ENCODE measurements at regions of chr15 and their contacts with region 1.

Region 1: GRCh38 chr15:58331903-58332675 is 99.7 kb upstream of the LIPC start:
- DNase-seq: peak; percentile 92 to 96 (median 95)
- ATAC-seq: peak; percentile 69 to 79 (median 75)
- H3K4me3 ChIP-seq: no peak overlapping the region
- H3K27ac ChIP-seq: peak overlapping the region; percentile 89 to 95 (median 91)
- H3K4me1 ChIP-seq: peaks cover 0 to 35% (median 14%) of the 10 kb centered on the region in 4 donors
- H3K27me3 ChIP-seq: no peaks in the 10 kb centered on the region
- CTCF ChIP-seq: no peak
- POLR2A ChIP-seq: peak; percentile 46

Region 2: GRCh38 chr15:58378254-58379085 is 46.4 kb after region 1 on chr15:
- intact Hi-C with region 1: no loop called
- DNase-seq: no peak
- ATAC-seq: no peak
- H3K4me3 ChIP-seq: no peak overlapping the region
- H3K27ac ChIP-seq: no peak overlapping the region
- H3K4me1 ChIP-seq: peaks cover 0 to 5% (median 2%) of the 10 kb centered on the region in 4 donors
- H3K27me3 ChIP-seq: no peaks in the 10 kb centered on the region
- CTCF ChIP-seq: no peak
- POLR2A ChIP-seq: no peak

Region 3: DNA sequence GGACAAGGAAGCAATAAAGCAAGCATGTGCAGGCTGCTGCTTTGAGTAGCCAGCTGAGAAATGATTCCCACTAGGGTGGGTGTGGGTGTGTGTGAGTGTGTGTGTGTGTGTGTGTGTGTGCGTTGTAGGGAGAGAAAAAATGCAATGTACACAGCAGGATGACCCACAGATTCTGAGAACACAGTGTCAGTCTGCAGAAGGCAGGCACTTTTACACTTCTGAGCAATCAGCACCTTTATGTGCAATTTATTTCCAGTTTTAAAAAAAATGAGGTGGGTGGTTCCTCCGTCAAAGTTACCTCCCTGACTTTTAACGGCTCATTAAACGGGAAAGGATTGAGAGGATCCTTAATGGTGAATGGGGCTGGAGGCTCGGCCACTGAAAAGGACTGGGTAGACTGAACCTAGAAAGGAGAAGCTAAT is 61.2 kb after region 1 on chr15:
- intact Hi-C with region 1: loop called in 1 of 2 experiments (anchors 5 kb)
- DNase-seq: no peak
- ATAC-seq: no peak
- H3K4me3 ChIP-seq: no peak overlapping the region
- H3K27ac ChIP-seq: peak overlapping the region in 1 of 3 donors; percentile 57
- H3K4me1 ChIP-seq: peaks cover 0 to 47% (median 18%) of the 10 kb centered on the region in 4 donors
- H3K27me3 ChIP-seq: no peaks in the 10 kb centered on the region
- CTCF ChIP-seq: no peak
- POLR2A ChIP-seq: no peak

Region 4: DNA sequence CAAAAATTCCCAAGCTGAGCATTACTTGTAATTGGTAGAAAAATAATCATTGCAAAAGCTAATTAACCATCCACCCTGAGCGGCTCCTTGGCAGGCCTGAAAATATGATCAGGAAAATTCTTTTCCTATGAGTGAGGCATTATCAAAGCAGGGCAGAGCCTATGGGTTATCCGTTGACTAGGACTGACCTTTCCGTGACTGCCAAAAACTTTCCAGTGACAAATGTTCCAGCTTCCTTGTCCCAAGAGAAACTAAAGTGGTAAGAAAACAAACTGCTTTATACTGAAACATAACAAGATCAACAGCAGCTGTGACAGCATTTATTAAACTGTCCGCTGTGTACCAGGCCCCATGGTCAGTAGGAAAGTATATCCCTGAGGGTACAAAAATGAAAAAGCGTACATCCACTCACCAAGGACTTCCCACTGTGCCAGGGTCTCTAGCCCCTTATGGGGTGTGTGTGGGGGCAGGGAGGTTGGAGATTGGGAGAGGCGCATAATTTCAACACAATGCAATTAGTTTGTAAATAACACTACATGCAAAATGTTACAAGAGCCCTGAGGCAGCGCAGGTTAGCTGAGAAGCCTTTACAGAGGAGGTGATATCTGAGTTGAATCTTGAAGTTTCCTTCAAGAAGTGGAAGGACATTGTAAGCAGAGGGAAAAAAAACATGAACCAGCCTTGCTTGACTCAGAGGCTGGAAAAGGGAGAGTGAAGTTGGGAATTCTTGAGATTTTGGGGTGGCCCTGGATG is 108.2 kb after region 1 on chr15:
- intact Hi-C with region 1: loop called in 1 of 2 experiments (anchors 5 kb)
- DNase-seq: peak in 1 of 3 donors; percentile 76
- ATAC-seq: peak; percentile 58 to 81 (median 66)
- H3K4me3 ChIP-seq: no peak overlapping the region
- H3K27ac ChIP-seq: peak overlapping the region; percentile 93 to 98 (median 94)
- H3K4me1 ChIP-seq: peaks cover 0 to 78% (median 40%) of the 10 kb centered on the region in 4 donors
- H3K27me3 ChIP-seq: no peaks in the 10 kb centered on the region
- CTCF ChIP-seq: no peak
- POLR2A ChIP-seq: peak; percentile 46